CD14-positive monocyte (primary cell): ENCODE measurements at regions of chr13 and their contacts with region 1.

Region 1: DNA sequence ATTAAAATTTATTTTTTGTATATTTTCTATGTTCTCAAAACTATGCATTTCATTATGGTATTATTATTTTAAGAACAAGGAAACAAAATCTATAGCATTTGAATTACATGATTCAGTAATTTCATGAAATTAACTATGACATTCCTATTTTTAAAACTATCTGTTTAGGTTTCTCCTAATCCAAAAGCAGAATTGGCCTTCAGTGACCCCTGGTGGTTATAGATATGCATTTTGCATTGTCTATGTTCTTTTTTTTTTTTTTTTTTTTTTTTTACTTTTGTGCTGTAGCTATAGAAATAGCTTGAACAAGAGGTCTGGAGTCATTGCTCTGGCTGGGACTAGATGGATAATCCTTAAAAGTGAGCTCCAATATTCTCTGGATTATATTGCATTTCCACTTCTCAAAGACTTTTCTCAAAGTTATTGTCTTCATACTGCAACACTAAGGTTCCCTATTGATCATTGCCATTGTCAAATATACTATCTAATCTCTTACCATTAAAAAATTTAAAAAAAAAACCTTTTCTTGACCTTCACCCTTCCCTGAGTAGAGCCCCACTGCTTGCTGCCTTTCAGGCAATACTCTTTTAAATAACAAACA is 15.9 kb upstream of the DNAJC3 start:
- DNase-seq: peak; percentile 29 to 65 (median 45)
- H3K4me3 ChIP-seq: no peak overlapping the region
- H3K4me3 Mint-ChIP-seq: no peak overlapping the region
- H3K27ac ChIP-seq: no peak overlapping the region
- H3K27ac Mint-ChIP-seq: no peak overlapping the region
- H3K4me1 ChIP-seq: no peaks in the 10 kb centered on the region
- H3K4me1 Mint-ChIP-seq: no peaks in the 10 kb centered on the region
- H3K27me3 ChIP-seq: no peaks in the 10 kb centered on the region
- H3K27me3 Mint-ChIP-seq: peaks cover 0 to 3% (median 1%) of the 10 kb centered on the region in 3 donors
- CTCF ChIP-seq: peak; percentile 85

Region 2: GRCh38 chr13:95536632-95537241 is 124.3 kb before region 1 on chr13:
- intact Hi-C with region 1: loop called in 1 of 2 experiments (anchors 10 kb)
- DNase-seq: peak in 1 of 3 donors; percentile 42
- H3K4me3 ChIP-seq: no peak overlapping the region
- H3K4me3 Mint-ChIP-seq: no peak overlapping the region
- H3K27ac ChIP-seq: no peak overlapping the region
- H3K27ac Mint-ChIP-seq: no peak overlapping the region
- H3K4me1 ChIP-seq: peaks cover 7 to 10% of the 10 kb centered on the region in 2 donors
- H3K4me1 Mint-ChIP-seq: peaks cover 12% of the 10 kb centered on the region
- H3K27me3 ChIP-seq: no peaks in the 10 kb centered on the region
- H3K27me3 Mint-ChIP-seq: peaks cover 0 to 3% (median 0%) of the 10 kb centered on the region in 3 donors
- CTCF ChIP-seq: peak; percentile 72

Region 3: GRCh38 chr13:95603887-95604533 is 57.1 kb before region 1 on chr13:
- intact Hi-C with region 1: no loop called
- DNase-seq: peak; percentile 5 to 32 (median 16)
- H3K4me3 ChIP-seq: no peak overlapping the region
- H3K4me3 Mint-ChIP-seq: no peak overlapping the region
- H3K27ac ChIP-seq: no peak overlapping the region
- H3K27ac Mint-ChIP-seq: peak overlapping the region in 2 of 7 donors; percentile 1 to 8
- H3K4me1 ChIP-seq: peaks cover 4 to 7% of the 10 kb centered on the region in 2 donors
- H3K4me1 Mint-ChIP-seq: peaks cover 2% of the 10 kb centered on the region
- H3K27me3 ChIP-seq: no peaks in the 10 kb centered on the region
- H3K27me3 Mint-ChIP-seq: peaks cover 1 to 4% (median 2%) of the 10 kb centered on the region in 3 donors
- CTCF ChIP-seq: no peak